ENCODE measurements at regions of chr2 and their contacts with region 1.

Region 1: DNA sequence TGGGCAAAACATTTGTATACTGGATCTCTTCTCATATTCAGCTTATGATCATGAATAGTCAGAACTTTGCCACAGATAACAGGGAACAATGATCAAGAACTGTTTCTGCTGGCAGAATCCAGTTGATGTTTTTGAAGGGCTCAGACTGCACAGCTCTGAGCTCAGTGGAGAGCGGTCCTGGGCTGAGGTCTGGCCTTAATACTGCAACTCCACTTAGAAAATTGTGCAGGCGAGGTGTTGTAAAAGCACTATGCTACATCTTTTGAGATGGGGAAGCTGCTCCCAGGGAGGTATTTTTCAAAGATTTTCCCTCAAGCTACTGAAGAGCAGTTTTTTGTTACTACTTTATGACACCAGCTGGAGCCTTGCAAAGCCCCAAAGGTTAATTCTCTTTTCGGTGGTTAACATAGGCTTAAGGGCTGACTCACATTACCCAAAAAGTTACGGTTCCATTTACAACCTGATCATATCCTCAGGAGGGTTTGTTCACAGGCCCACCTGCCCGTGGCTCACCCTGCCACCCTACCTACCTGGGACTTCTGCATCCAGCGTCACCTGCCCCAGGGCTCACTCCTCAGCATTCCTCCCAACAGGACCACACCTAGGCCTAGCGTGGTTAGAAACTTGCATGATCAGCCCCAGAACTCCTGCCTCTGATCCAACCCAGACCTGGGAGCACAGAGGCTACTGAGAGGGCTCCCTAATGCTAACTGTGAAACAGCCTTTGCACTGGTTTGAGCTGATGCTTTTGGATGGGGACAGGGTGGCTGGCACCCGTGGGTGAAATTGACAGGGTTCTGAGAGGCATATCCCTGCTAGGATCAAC is 114.4 kb downstream of the NCK2 start:
- DNase-seq: peak; percentile 51
- ATAC-seq: peak; percentile 65
- H3K4me3 Mint-ChIP-seq: peak overlapping the region; percentile 40
- H3K27ac Mint-ChIP-seq: peak overlapping the region; percentile 92
- H3K4me1 Mint-ChIP-seq: peaks cover 93% of the 10 kb centered on the region
- H3K27me3 Mint-ChIP-seq: no peaks in the 10 kb centered on the region

Region 2: GRCh38 chr2:105362862-105363591 is 496.1 kb before region 1 on chr2:
- CTCF ChIA-PET with region 1: no interaction called
- POLR2A ChIA-PET with region 1: no interaction called
- intact Hi-C with region 1: no loop called
- DNase-seq: peak; percentile 20
- ATAC-seq: peak; percentile 58
- H3K4me3 Mint-ChIP-seq: no peak overlapping the region
- H3K27ac Mint-ChIP-seq: no peak overlapping the region
- H3K4me1 Mint-ChIP-seq: peaks cover 29% of the 10 kb centered on the region
- H3K27me3 Mint-ChIP-seq: no peaks in the 10 kb centered on the region

Region 3: GRCh38 chr2:105567996-105568494 is 291.0 kb before region 1 on chr2:
- CTCF ChIA-PET with region 1: no interaction called
- POLR2A ChIA-PET with region 1: no interaction called
- intact Hi-C with region 1: no loop called
- DNase-seq: no peak
- ATAC-seq: no peak
- H3K4me3 Mint-ChIP-seq: no peak overlapping the region
- H3K27ac Mint-ChIP-seq: no peak overlapping the region
- H3K4me1 Mint-ChIP-seq: peaks cover 2% of the 10 kb centered on the region
- H3K27me3 Mint-ChIP-seq: peaks cover 6% of the 10 kb centered on the region

Region 4: GRCh38 chr2:105836840-105837692 is 22.0 kb before region 1 on chr2:
- CTCF ChIA-PET with region 1: no interaction called
- POLR2A ChIA-PET with region 1: interaction called, 4 read pairs
- intact Hi-C with region 1: loop called (anchors 1 to 2 kb)
- DNase-seq: peak; percentile 74
- ATAC-seq: peak; percentile 85
- H3K4me3 Mint-ChIP-seq: peak overlapping the region; percentile 50
- H3K27ac Mint-ChIP-seq: peak overlapping the region; percentile 82
- H3K4me1 Mint-ChIP-seq: peaks cover 88% of the 10 kb centered on the region
- H3K27me3 Mint-ChIP-seq: no peaks in the 10 kb centered on the region

Region 5: GRCh38 chr2:105873721-105874120 is 14.6 kb after region 1 on chr2:
- CTCF ChIA-PET with region 1: interaction called, 3 read pairs
- POLR2A ChIA-PET with region 1: no interaction called
- intact Hi-C with region 1: loop called in 1 of 2 experiments (anchors 2 kb)
- DNase-seq: peak; percentile 83
- ATAC-seq: peak; percentile 90
- H3K4me3 Mint-ChIP-seq: peak overlapping the region; percentile 51
- H3K27ac Mint-ChIP-seq: peak overlapping the region; percentile 75
- H3K4me1 Mint-ChIP-seq: peaks cover 99% of the 10 kb centered on the region
- H3K27me3 Mint-ChIP-seq: no peaks in the 10 kb centered on the region

Measured in activated CD4-positive, alpha-beta T cell treated with anti-CD3 and anti-CD28 coated beads for 36 hours (primary cell).